HEK293 (cell line): ENCODE measurements at regions of chr10 and their contacts with region 1.

Region 1: DNA sequence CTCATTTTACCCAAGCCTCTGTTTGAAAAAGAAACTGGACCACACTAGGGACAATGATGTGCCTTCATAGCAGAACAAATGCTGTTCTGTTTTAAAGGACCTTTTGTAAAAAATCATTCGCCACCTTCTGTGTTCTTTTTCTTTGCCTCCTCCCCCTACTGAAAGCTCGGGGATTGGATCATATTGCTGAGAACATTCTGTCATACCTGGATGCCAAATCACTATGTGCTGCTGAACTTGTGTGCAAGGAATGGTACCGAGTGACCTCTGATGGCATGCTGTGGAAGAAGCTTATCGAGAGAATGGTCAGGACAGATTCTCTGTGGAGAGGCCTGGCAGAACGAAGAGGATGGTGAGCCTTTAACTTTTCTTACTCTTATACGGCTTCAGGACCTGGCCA is 62.2 kb downstream of the POLL start:
- H3K4me3 ChIP-seq: no peak overlapping the region
- H3K27ac ChIP-seq: no peak overlapping the region
- H3K4me1 ChIP-seq: peaks cover 6% of the 10 kb centered on the region; the same call in 1 of the 2 replicates
- CTCF ChIP-seq: no peak

Region 2: DNA sequence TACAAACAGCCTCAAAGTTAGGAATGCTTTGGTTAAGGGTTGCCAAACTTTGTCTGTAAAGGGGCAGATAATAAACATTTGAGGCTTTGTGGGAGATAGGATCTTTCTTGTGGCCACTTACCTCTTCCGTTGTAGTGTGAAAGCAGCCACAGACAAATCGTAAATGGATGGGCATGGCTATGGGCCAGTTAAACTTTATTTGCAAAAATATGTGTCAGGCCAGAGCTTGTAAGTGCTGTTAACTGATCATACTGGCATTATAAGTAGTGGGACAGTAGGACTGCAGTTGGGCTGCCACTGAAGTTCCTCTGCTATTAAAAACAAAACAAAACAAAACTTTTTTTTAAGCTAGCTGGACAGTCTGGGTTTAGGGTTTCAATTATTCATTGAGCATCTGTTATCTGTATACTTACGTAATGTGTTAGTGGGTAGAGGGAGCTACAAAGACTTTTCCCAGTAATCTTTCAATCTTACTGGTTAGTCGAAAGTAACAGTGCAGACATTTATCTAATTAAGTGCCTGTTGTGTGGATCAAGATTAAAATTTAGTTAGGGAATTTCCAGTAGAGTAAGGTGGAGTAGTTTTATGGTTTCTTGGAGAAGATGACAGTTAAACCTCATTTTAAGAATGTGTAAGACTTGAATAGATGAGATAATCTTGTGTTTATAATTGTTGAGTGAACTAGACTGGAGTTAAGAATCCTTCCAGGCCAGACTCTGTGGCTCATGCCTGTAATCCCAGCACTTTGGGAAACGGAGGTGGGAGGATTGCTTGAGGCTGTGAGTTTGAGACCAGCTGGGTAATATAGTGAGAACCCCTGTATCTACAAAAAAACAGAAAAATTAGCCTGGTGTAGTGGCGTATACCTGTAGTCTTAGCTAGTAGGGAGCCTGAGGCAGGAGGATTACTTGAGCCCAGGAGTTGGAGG is 71.8 kb before region 1 on chr10:
- CTCF ChIA-PET with region 1: no interaction called
- POLR2A ChIA-PET with region 1: no interaction called
- H3K4me3 ChIP-seq: no peak overlapping the region
- H3K27ac ChIP-seq: peak overlapping the region; percentile 67
- H3K4me1 ChIP-seq: peaks cover 55% of the 10 kb centered on the region
- CTCF ChIP-seq: no peak

Region 3: DNA sequence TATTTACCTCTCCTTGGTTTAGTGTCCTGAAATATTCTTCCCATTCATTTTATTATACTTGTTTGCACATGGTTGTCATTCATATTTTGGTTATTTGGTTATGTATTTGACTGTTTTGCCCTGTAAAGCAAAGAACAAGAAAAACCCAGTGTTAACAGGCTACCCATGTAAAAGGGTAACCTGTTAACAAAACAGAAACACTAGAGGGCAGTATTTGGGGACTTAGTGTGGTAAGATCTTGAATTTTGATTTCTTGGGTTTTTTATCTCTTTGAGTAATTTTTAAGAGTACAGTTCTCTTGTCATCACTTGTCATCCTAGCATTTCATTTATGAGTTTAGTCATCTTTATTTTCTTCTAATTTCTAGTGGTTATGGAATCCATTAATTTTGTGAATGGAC is 11.0 kb after region 1 on chr10:
- CTCF ChIA-PET with region 1: interaction called, 11 read pairs
- POLR2A ChIA-PET with region 1: no interaction called
- H3K4me3 ChIP-seq: no peak overlapping the region
- H3K27ac ChIP-seq: no peak overlapping the region
- H3K4me1 ChIP-seq: no peaks in the 10 kb centered on the region
- CTCF ChIP-seq: 0 out of 2 replicates have a peak, but pooled peaks have one; percentile 18